Common myeloid progenitor, CD34-positive (primary cell): ENCODE measurements at regions of chr16 and their contacts with region 1.

Region 1: GRCh38 chr16:3023669-3024478 is at the starts of genes HCFC1R1 and THOC6:
- DNase-seq: peak; percentile 98
- H3K4me3 ChIP-seq: peak within 1 kb of the TSS; percentile 16 to 82 (median 77)
- H3K27ac ChIP-seq: peak within 1 kb of the TSS; percentile 81 to 90
- H3K4me1 ChIP-seq: peaks cover 0 to 61% (median 57%) of the 10 kb centered on the region in 4 experiments
- H3K27me3 ChIP-seq: peaks cover 0 to 6% (median 4%) of the 10 kb centered on the region in 5 experiments

Region 2: DNA sequence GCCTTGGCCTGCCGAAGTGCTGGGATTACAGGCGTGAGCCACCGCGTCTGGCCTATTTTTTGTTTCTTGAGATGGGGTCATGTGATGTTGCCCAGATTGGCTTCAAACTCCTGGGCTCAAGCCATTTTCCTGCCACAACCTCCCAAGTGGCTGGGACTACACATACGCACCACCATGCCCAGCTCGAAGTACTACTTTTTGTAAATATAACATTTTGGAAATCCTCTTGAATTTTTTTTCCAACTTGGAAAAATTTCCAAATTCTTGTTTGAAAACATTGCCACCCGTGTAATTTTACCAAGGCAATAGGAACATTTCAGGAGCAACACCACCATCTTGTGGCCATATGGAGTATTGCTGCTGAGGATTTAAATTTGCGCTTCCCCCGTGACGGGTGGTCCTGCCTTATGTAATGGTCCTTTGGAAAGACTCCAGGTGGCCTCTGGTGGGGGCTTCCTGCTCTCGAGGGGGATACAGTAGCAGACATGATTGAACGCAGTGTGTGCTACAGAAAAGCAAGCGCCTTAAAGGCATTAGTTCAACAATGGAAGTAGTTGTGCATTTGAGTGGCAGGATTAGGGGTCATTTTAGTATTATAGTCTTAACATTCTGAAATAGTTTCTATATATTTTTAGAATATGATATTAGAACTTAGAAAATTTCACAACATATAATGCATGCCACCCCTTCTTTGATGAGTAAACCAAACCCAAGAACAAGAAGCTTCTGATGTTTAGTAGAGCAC is 104.2 kb before region 1 on chr16:
- CTCF ChIA-PET with region 1: no interaction called
- POLR2A ChIA-PET with region 1: no interaction called
- DNase-seq: peak; percentile 66 to 89 (median 76)
- H3K4me3 ChIP-seq: no peak overlapping the region
- H3K27ac ChIP-seq: no peak overlapping the region
- H3K4me1 ChIP-seq: peaks cover 0 to 4% (median 2%) of the 10 kb centered on the region in 4 experiments
- H3K27me3 ChIP-seq: no peaks in the 10 kb centered on the region

Region 3: DNA sequence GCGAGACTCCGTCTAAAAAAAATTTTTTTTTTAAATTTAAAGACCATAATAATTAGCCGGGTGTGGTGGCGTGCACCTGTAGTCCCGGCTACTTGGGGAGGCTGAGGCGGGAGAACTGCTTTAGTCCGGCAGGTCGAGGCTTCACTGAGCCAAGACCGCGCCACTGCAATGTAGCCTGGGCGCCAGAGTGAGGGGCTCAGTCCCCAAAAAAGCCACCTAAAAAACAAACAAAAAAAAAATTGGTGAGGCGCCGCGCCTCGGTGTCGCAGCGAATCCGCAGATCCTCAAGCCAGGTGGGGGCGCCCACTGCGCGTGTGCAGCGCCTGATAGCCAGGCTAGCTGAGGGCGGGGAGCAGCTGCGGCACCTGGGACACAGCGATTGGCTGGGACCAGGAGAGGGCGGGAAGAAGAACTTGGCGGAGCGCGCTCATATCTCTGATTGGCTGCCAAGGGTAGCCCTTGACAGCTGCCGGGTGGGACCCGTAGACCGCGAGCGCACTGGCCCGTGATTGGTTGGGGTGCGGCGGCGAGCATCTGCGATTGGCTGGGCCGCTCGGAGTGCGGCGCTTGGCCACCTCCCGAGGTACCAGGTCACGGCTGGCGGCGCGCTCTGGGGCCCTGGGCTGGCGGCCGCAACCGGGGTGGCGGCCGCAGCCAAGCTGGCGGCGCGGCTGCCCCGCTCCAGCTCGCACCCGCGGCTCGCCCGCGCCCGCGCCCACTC is 20.1 kb before region 1 on chr16:
- CTCF ChIA-PET with region 1: interaction called, 197 read pairs
- POLR2A ChIA-PET with region 1: interaction called, 15 read pairs
- DNase-seq: peak; percentile 99 to 100 (median 100)
- H3K4me3 ChIP-seq: peak overlapping the region; percentile 19 to 81 (median 48)
- H3K27ac ChIP-seq: no peak overlapping the region
- H3K4me1 ChIP-seq: peaks cover 11 to 42% (median 35%) of the 10 kb centered on the region in 4 experiments
- H3K27me3 ChIP-seq: no peaks in the 10 kb centered on the region

Region 4: GRCh38 chr16:3009565-3010390 is 14.1 kb before region 1 on chr16:
- CTCF ChIA-PET with region 1: interaction called, 197 read pairs
- POLR2A ChIA-PET with region 1: interaction called, 15 read pairs
- DNase-seq: no peak
- H3K4me3 ChIP-seq: no peak overlapping the region
- H3K27ac ChIP-seq: no peak overlapping the region
- H3K4me1 ChIP-seq: peaks cover 11 to 54% (median 51%) of the 10 kb centered on the region in 4 experiments
- H3K27me3 ChIP-seq: peaks cover 0 to 4% (median 0%) of the 10 kb centered on the region in 5 experiments

Region 5: GRCh38 chr16:3045357-3045728 is 21.5 kb after region 1 on chr16:
- CTCF ChIA-PET with region 1: interaction called, 141 read pairs
- POLR2A ChIA-PET with region 1: no interaction called
- DNase-seq: peak in 2 of 3 donors; percentile 53 to 65
- H3K4me3 ChIP-seq: peak overlapping the region in 6 of 7 experiments; percentile 17 to 63 (median 56)
- H3K27ac ChIP-seq: no peak overlapping the region
- H3K4me1 ChIP-seq: peaks cover 0 to 29% (median 21%) of the 10 kb centered on the region in 4 experiments
- H3K27me3 ChIP-seq: peaks cover 7 to 95% (median 32%) of the 10 kb centered on the region in 5 experiments

Region 6: GRCh38 chr16:3242709-3243108 is 218.8 kb after region 1 on chr16:
- CTCF ChIA-PET with region 1: no interaction called
- POLR2A ChIA-PET with region 1: no interaction called
- DNase-seq: no peak
- H3K4me3 ChIP-seq: no peak overlapping the region
- H3K27ac ChIP-seq: no peak overlapping the region
- H3K4me1 ChIP-seq: peaks cover 0 to 3% (median 0%) of the 10 kb centered on the region in 4 experiments
- H3K27me3 ChIP-seq: peaks cover 0 to 2% (median 0%) of the 10 kb centered on the region in 5 experiments